ENCODE measurements at regions of chr2 and their contacts with region 1.

Region 1: GRCh38 chr2:135709992-135710391 is 31.7 kb upstream of the UBXN4 start:
- DNase-seq: peak in 1 of 2 experiments; percentile 81
- H3K4me3 ChIP-seq: no peak overlapping the region
- H3K27ac ChIP-seq: no peak overlapping the region
- H3K4me1 ChIP-seq: no peaks in the 10 kb centered on the region
- H3K27me3 ChIP-seq: no peaks in the 10 kb centered on the region
- CTCF ChIP-seq: peak; percentile 74 to 81 (median 79)
- EP300 ChIP-seq: no peak
- POLR2A ChIP-seq: no peak
- RAD21 ChIP-seq: peak; percentile 88 to 89

Region 2: GRCh38 chr2:135004005-135004746 is 705.8 kb before region 1 on chr2:
- CTCF ChIA-PET with region 1: interaction called, 26 read pairs
- POLR2A ChIA-PET with region 1: no interaction called
- DNase-seq: peak; percentile 50 to 85
- H3K4me3 ChIP-seq: no peak overlapping the region
- H3K27ac ChIP-seq: no peak overlapping the region
- H3K4me1 ChIP-seq: peaks cover 0 to 4% (median under 1%) of the 10 kb centered on the region in 4 experiments; a peak in 1 of 7 replicates
- H3K27me3 ChIP-seq: peaks cover 0 to 4% (median 0%) of the 10 kb centered on the region in 4 experiments; a peak in 2 of 7 replicates
- CTCF ChIP-seq: peak; percentile 85 to 92 (median 92)
- EP300 ChIP-seq: no peak
- POLR2A ChIP-seq: no peak
- RAD21 ChIP-seq: peak; percentile 97 to 98

Region 3: DNA sequence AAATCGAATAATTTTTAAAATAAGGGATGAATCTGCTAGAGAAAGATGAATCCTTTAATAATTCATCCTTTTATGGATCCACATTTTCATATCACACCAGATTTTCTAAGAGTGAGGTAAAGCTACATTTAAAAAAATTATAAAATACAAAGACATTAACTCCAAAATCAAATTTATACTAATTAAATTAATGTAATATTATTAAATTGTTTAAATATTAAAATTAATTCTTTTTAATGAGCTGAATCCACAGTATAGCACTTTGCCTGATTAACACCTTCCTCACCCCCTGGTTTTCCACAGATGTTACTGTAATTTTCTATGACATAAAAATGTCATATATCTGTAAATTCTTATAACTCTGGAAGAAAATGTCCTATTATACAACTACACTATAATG is 205.2 kb before region 1 on chr2:
- CTCF ChIA-PET with region 1: no interaction called
- POLR2A ChIA-PET with region 1: no interaction called
- DNase-seq: no peak
- H3K4me3 ChIP-seq: no peak overlapping the region
- H3K27ac ChIP-seq: no peak overlapping the region
- H3K4me1 ChIP-seq: no peaks in the 10 kb centered on the region
- H3K27me3 ChIP-seq: no peaks in the 10 kb centered on the region
- CTCF ChIP-seq: no peak
- EP300 ChIP-seq: no peak
- POLR2A ChIP-seq: no peak
- RAD21 ChIP-seq: no peak

Region 4: DNA sequence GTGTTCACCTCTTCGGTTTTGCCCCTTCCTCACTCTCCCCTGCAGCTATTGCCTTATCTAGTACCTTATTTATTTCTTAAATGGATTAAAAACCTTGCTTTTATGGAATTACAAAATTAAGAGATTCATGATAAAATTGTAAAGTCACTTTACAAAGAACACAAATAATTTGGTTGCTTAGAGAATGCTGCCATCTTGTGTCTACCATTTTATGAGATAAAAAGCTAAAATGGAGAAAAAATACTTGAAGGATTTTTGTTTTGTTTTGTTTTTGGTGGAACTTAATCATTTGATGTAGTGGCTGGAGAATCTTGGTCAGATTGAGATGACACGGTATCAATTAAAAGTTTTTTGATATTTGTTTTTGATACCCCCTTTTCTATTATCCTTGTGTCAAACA is 109.1 kb before region 1 on chr2:
- CTCF ChIA-PET with region 1: interaction called, 21 read pairs
- POLR2A ChIA-PET with region 1: no interaction called
- DNase-seq: no peak
- H3K4me3 ChIP-seq: no peak overlapping the region
- H3K27ac ChIP-seq: no peak overlapping the region
- H3K4me1 ChIP-seq: peaks cover 0 to 4% (median 0%) of the 10 kb centered on the region in 4 experiments; a peak in 1 of 7 replicates
- H3K27me3 ChIP-seq: no peaks in the 10 kb centered on the region
- CTCF ChIP-seq: no peak
- EP300 ChIP-seq: no peak
- POLR2A ChIP-seq: no peak
- RAD21 ChIP-seq: peak in 1 of 2 experiments; percentile 28; a peak in 1 of 4 replicates

Region 5: GRCh38 chr2:135685361-135685760 is 24.6 kb before region 1 on chr2:
- CTCF ChIA-PET with region 1: interaction called, 28 read pairs
- POLR2A ChIA-PET with region 1: no interaction called
- DNase-seq: no peak
- H3K4me3 ChIP-seq: no peak overlapping the region
- H3K27ac ChIP-seq: no peak overlapping the region
- H3K4me1 ChIP-seq: no peaks in the 10 kb centered on the region
- H3K27me3 ChIP-seq: no peaks in the 10 kb centered on the region
- CTCF ChIP-seq: no peak
- EP300 ChIP-seq: no peak
- POLR2A ChIP-seq: no peak
- RAD21 ChIP-seq: no peak

Region 6: DNA sequence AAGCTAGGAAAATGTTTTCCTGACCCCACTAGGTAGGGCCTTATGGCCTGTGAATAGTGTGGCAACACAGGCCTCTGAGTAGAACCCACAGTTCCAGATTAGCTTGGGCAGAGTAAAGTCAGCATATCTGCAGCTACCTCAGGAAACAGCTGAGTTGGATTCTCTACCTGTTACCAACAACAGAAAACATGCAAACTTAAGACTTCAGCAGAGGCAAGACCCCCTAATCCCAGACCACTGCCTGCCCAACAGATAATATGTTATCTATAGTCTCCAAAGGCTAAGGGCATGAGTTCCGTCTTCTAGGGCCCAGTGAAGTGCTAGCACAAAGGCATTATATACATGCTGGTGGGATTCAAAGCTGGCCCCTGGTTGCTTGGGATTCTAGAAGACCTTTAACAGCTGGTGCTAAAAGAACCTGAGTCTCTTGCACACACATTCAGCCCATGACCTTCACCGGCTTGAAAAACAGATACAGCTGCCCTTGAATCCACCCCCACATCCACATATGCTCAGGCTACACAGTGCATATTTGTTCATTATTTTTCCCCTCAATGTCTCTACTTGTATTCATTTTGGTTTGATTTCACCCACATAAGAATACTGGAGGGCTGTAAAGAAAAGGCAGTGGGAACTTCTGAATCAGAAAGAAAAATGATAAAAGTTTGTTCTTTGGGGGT is 18.2 kb after region 1 on chr2:
- CTCF ChIA-PET with region 1: interaction called, 28 read pairs
- POLR2A ChIA-PET with region 1: no interaction called
- DNase-seq: no peak
- H3K4me3 ChIP-seq: no peak overlapping the region
- H3K27ac ChIP-seq: no peak overlapping the region
- H3K4me1 ChIP-seq: no peaks in the 10 kb centered on the region
- H3K27me3 ChIP-seq: no peaks in the 10 kb centered on the region
- CTCF ChIP-seq: no peak
- EP300 ChIP-seq: no peak
- POLR2A ChIP-seq: no peak
- RAD21 ChIP-seq: no peak

Region 7: DNA sequence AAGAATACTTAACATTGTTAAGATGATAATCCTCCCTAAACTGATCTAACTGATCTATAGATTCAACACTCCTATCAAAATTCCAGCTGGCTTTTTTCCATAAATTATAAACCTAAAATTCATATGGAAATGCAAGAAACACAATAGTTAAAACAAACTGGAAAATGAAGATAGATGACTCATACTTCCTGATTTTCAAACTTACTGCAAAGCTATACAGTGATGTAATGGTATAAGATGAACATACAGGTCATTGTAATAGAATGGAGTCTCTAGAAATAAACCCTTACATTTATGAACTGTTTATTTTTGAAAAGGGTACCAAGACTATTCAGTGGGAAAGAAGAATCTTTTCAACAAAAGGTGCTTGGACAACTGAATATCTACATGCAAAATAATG is 63.9 kb after region 1 on chr2:
- CTCF ChIA-PET with region 1: no interaction called
- POLR2A ChIA-PET with region 1: no interaction called
- DNase-seq: no peak
- H3K4me3 ChIP-seq: no peak overlapping the region
- H3K27ac ChIP-seq: no peak overlapping the region
- H3K4me1 ChIP-seq: no peaks in the 10 kb centered on the region
- H3K27me3 ChIP-seq: no peaks in the 10 kb centered on the region
- CTCF ChIP-seq: no peak
- EP300 ChIP-seq: no peak
- POLR2A ChIP-seq: no peak
- RAD21 ChIP-seq: no peak